Caco-2 (cell line): ENCODE measurements at regions of chr17 and their contacts with region 1.

Region 1: GRCh38 chr17:19513897-19514488 is 19.7 kb upstream of the SLC47A1 start:
- DNase-seq: peak; percentile 69 to 79
- H3K4me3 ChIP-seq: no peak overlapping the region
- H3K4me3 Mint-ChIP-seq: no peak overlapping the region
- H3K27ac Mint-ChIP-seq: no peak overlapping the region
- H3K4me1 ChIP-seq: peaks cover 6% of the 10 kb centered on the region
- H3K4me1 Mint-ChIP-seq: peaks cover 7% of the 10 kb centered on the region
- H3K27me3 ChIP-seq: no peaks in the 10 kb centered on the region
- H3K27me3 Mint-ChIP-seq: no peaks in the 10 kb centered on the region
- CTCF ChIP-seq: peak; percentile 89 to 93

Region 2: DNA sequence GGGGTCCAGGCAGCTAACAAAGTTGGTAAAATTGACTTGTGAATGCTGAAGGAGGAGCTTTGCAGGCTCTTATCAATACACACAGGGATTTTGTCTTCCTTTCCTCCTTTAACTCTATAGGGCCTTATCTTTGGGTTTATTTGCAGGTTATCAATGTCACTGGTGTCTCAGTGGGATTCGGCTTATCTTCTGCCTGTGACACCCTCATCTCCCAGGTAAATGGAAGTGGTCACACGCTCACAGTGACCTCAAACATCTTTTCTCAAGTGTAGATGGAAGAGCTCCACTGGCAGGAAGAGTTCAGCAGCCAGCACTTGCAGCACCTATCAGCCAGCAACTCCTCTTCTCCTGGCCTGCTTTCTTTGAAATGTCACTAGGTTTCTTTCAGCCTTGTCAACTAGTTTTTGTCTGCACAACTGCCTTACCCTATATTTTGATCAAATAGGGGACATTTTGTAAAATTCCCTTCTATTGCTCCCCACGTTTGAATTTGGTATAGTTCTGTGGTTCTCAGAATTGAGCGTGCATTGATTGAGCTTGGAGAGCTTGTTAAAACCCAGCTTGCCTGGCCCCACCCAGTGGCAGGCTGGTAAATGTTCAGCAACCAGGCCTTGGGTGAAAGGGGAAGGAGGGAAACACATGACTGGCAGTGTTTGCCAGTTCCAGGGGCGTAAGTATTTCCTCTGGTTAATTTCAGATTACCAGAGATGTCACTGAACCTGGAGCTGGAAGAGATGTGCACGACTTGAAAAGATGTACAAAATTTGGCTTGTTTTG is 32.5 kb after region 1 on chr17:
- CTCF ChIA-PET with region 1: interaction called, 3 read pairs
- POLR2A ChIA-PET with region 1: no interaction called
- intact Hi-C with region 1: loop called (anchors 1 kb)
- DNase-seq: peak; percentile 30 to 57
- H3K4me3 ChIP-seq: no peak overlapping the region
- H3K4me3 Mint-ChIP-seq: no peak overlapping the region
- H3K27ac Mint-ChIP-seq: no peak overlapping the region
- H3K4me1 ChIP-seq: peaks cover 35% of the 10 kb centered on the region
- H3K4me1 Mint-ChIP-seq: peaks cover 13% of the 10 kb centered on the region
- H3K27me3 ChIP-seq: no peaks in the 10 kb centered on the region
- H3K27me3 Mint-ChIP-seq: no peaks in the 10 kb centered on the region
- CTCF ChIP-seq: peak in 1 of 2 experiments; percentile 41

Region 3: GRCh38 chr17:19590912-19591551 is 77.0 kb after region 1 on chr17:
- CTCF ChIA-PET with region 1: no interaction called
- POLR2A ChIA-PET with region 1: no interaction called
- intact Hi-C with region 1: loop called (anchors 1 kb)
- DNase-seq: peak in 1 of 2 experiments; percentile 18
- H3K4me3 ChIP-seq: no peak overlapping the region
- H3K4me3 Mint-ChIP-seq: no peak overlapping the region
- H3K27ac Mint-ChIP-seq: no peak overlapping the region
- H3K4me1 ChIP-seq: no peaks in the 10 kb centered on the region
- H3K4me1 Mint-ChIP-seq: no peaks in the 10 kb centered on the region
- H3K27me3 ChIP-seq: no peaks in the 10 kb centered on the region
- H3K27me3 Mint-ChIP-seq: no peaks in the 10 kb centered on the region
- CTCF ChIP-seq: peak in 1 of 2 experiments; percentile 30

Region 4: GRCh38 chr17:19672009-19672750 is 158.2 kb after region 1 on chr17:
- CTCF ChIA-PET with region 1: interaction called, 3 read pairs
- POLR2A ChIA-PET with region 1: no interaction called
- intact Hi-C with region 1: loop called (anchors 1 kb)
- DNase-seq: peak; percentile 75 to 80
- H3K4me3 ChIP-seq: no peak overlapping the region
- H3K4me3 Mint-ChIP-seq: peak overlapping the region; percentile 51
- H3K27ac Mint-ChIP-seq: peak overlapping the region; percentile 70
- H3K4me1 ChIP-seq: peaks cover 36% of the 10 kb centered on the region
- H3K4me1 Mint-ChIP-seq: peaks cover 35% of the 10 kb centered on the region
- H3K27me3 ChIP-seq: no peaks in the 10 kb centered on the region
- H3K27me3 Mint-ChIP-seq: no peaks in the 10 kb centered on the region
- CTCF ChIP-seq: peak; percentile 41 to 54